ENCODE measurements at regions of chr2 and their contacts with region 1.

Region 1: DNA sequence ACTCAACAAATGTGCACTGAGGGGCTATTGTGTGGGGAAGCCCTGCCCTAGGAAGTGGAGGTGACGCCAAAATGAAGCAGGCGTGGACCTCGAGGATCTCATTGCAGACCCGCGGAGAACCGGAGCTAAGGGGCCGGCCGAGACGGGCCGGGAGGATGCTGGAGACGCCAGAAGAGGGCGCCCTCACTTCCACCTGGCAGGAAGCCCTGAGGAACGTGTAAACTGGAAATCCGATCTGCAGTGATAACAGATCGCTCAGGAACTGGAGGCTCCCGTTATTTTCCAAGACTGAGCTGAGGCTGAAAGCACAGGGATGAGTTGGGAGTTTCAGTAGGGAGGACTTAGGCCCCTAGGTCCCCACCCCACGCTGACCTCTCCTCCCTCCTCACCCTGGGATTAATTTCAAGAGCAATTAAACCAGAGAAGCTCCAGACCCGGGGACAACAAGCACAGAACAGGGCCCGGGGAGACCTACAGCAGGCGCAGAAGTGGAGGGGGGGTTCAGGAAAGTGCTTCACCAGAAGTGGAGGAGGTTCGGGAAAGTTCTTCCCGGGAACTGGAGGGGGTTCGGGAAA is 7.7 kb upstream of the COL6A3 start:
- DNase-seq: peak; percentile 66 to 92 (median 76)
- ATAC-seq: peak; percentile 88
- H3K4me3 ChIP-seq: peak overlapping the region; percentile 25
- H3K4me3 Mint-ChIP-seq: peak overlapping the region; percentile 65
- H3K27ac ChIP-seq: no peak overlapping the region
- H3K27ac Mint-ChIP-seq: no peak overlapping the region
- H3K4me1 ChIP-seq: peaks cover 11% of the 10 kb centered on the region
- H3K4me1 Mint-ChIP-seq: peaks cover 54% of the 10 kb centered on the region
- H3K27me3 ChIP-seq: no peaks in the 10 kb centered on the region
- H3K27me3 Mint-ChIP-seq: no peaks in the 10 kb centered on the region
- CTCF ChIP-seq: peak; percentile 92

Region 2: DNA sequence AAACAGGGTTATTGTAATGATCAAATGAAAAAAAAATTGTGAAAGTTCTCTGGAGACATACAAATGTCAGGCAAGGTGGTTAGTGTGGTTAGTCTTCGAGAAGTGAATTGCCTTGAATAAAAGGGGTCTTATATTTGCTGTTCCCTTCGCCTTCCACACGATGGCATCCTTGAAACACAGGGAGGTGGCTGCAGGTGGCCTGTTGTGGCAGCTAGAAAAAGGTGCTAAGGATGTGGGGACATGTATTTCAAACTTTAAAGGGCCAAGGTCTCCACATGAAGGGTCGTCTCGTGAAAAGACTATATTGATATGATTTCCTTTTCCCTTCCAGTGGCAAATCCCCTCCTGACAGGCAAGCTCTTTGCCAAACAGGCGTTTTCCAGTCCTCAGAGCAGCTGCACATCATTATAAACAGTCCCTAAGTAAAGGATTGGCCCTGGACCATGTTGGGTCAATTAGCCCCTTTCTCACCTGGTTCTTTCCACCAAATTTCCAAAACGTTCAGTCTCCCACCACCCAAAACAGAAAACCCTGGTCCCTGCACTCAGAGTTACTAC is 267.5 kb before region 1 on chr2:
- CTCF ChIA-PET with region 1: interaction called, 5 read pairs
- POLR2A ChIA-PET with region 1: interaction called, 3 read pairs
- intact Hi-C with region 1: loop called (anchors 5 kb)
- DNase-seq: peak; percentile 17 to 74 (median 40)
- ATAC-seq: peak; percentile 66
- H3K4me3 ChIP-seq: no peak overlapping the region
- H3K4me3 Mint-ChIP-seq: no peak overlapping the region
- H3K27ac ChIP-seq: no peak overlapping the region
- H3K27ac Mint-ChIP-seq: no peak overlapping the region
- H3K4me1 ChIP-seq: peaks cover 4% of the 10 kb centered on the region
- H3K4me1 Mint-ChIP-seq: no peaks in the 10 kb centered on the region
- H3K27me3 ChIP-seq: no peaks in the 10 kb centered on the region
- H3K27me3 Mint-ChIP-seq: no peaks in the 10 kb centered on the region
- CTCF ChIP-seq: peak; percentile 61

Region 3: DNA sequence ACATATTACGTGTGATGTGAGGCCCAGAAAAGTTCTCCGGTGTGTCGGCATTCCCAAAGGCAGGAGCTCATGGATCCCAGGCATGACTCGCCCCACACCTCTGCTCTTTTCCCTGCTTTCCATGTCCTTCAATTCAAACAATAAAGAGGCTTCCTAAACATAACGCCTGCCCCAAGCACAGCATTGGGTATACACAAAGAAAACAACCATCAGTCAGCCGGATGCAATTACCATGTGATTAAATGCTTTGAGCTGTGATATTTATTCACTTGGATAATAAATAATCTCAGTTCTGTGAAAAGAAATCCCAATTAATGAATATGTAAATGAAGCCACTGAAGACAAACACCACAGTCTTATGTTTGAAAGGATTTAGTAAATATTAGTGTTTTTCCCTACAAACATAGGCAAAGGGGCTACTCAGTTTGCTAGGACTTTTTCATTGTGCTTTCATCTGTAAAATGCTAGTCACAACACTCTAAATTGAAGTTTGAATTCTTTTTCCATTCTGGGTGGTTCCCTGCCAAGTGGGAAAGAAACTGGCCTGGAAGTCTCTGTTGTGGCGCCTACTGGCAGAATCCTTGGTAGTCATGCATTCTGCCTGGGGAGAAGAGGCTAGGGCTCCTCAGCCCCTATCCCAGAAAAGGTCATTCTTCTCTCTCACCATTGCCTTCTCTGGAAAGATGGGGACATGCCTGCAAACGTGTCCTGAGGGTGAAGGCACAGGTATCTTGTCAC is 152.3 kb before region 1 on chr2:
- CTCF ChIA-PET with region 1: no interaction called
- POLR2A ChIA-PET with region 1: no interaction called
- intact Hi-C with region 1: no loop called
- DNase-seq: no peak
- ATAC-seq: no peak
- H3K4me3 ChIP-seq: no peak overlapping the region
- H3K4me3 Mint-ChIP-seq: no peak overlapping the region
- H3K27ac ChIP-seq: no peak overlapping the region
- H3K27ac Mint-ChIP-seq: no peak overlapping the region
- H3K4me1 ChIP-seq: no peaks in the 10 kb centered on the region
- H3K4me1 Mint-ChIP-seq: no peaks in the 10 kb centered on the region
- H3K27me3 ChIP-seq: peaks cover 0 to 8% of the 10 kb centered on the region in 2 experiments
- H3K27me3 Mint-ChIP-seq: peaks cover 26% of the 10 kb centered on the region
- CTCF ChIP-seq: no peak

Region 4: GRCh38 chr2:237434866-237435311 is 13.3 kb after region 1 on chr2:
- CTCF ChIA-PET with region 1: interaction called, 47 read pairs
- POLR2A ChIA-PET with region 1: interaction called, 16 read pairs
- intact Hi-C with region 1: loop called (anchors 2 kb)
- DNase-seq: peak; percentile 29 to 90 (median 72)
- ATAC-seq: peak; percentile 65
- H3K4me3 ChIP-seq: peak overlapping the region; percentile 22
- H3K4me3 Mint-ChIP-seq: peak overlapping the region; percentile 87
- H3K27ac ChIP-seq: peak overlapping the region in 1 of 2 donors; percentile 48
- H3K27ac Mint-ChIP-seq: peak overlapping the region; percentile 83
- H3K4me1 ChIP-seq: peaks cover 72% of the 10 kb centered on the region
- H3K4me1 Mint-ChIP-seq: peaks cover 84% of the 10 kb centered on the region
- H3K27me3 ChIP-seq: no peaks in the 10 kb centered on the region
- H3K27me3 Mint-ChIP-seq: no peaks in the 10 kb centered on the region
- CTCF ChIP-seq: no peak

Region 5: GRCh38 chr2:237441605-237442274 is 20.1 kb after region 1 on chr2:
- CTCF ChIA-PET with region 1: interaction called, 9 read pairs
- POLR2A ChIA-PET with region 1: interaction called, 12 read pairs
- intact Hi-C with region 1: loop called in 1 of 2 experiments (anchors 2 kb)
- DNase-seq: peak in 5 of 14 experiments; percentile 37 to 73 (median 55)
- ATAC-seq: peak; percentile 96
- H3K4me3 ChIP-seq: no peak overlapping the region
- H3K4me3 Mint-ChIP-seq: peak overlapping the region; percentile 23
- H3K27ac ChIP-seq: no peak overlapping the region
- H3K27ac Mint-ChIP-seq: peak overlapping the region; percentile 72
- H3K4me1 ChIP-seq: peaks cover 46% of the 10 kb centered on the region
- H3K4me1 Mint-ChIP-seq: peaks cover 78% of the 10 kb centered on the region
- H3K27me3 ChIP-seq: no peaks in the 10 kb centered on the region
- H3K27me3 Mint-ChIP-seq: no peaks in the 10 kb centered on the region
- CTCF ChIP-seq: no peak

Region 6: GRCh38 chr2:237474931-237475703 is 53.5 kb after region 1 on chr2:
- CTCF ChIA-PET with region 1: interaction called, 127 read pairs
- POLR2A ChIA-PET with region 1: interaction called, 59 read pairs
- intact Hi-C with region 1: loop called (anchors 1 kb)
- DNase-seq: peak; percentile 57 to 85 (median 72)
- ATAC-seq: peak; percentile 85
- H3K4me3 ChIP-seq: peak overlapping the region; percentile 67
- H3K4me3 Mint-ChIP-seq: peak overlapping the region; percentile 93
- H3K27ac ChIP-seq: no peak overlapping the region
- H3K27ac Mint-ChIP-seq: peak overlapping the region; percentile 82
- H3K4me1 ChIP-seq: peaks cover 20% of the 10 kb centered on the region
- H3K4me1 Mint-ChIP-seq: peaks cover 32% of the 10 kb centered on the region
- H3K27me3 ChIP-seq: peaks cover 0 to 5% of the 10 kb centered on the region in 2 experiments
- H3K27me3 Mint-ChIP-seq: peaks cover 15% of the 10 kb centered on the region
- CTCF ChIP-seq: peak; percentile 97

Region 7: DNA sequence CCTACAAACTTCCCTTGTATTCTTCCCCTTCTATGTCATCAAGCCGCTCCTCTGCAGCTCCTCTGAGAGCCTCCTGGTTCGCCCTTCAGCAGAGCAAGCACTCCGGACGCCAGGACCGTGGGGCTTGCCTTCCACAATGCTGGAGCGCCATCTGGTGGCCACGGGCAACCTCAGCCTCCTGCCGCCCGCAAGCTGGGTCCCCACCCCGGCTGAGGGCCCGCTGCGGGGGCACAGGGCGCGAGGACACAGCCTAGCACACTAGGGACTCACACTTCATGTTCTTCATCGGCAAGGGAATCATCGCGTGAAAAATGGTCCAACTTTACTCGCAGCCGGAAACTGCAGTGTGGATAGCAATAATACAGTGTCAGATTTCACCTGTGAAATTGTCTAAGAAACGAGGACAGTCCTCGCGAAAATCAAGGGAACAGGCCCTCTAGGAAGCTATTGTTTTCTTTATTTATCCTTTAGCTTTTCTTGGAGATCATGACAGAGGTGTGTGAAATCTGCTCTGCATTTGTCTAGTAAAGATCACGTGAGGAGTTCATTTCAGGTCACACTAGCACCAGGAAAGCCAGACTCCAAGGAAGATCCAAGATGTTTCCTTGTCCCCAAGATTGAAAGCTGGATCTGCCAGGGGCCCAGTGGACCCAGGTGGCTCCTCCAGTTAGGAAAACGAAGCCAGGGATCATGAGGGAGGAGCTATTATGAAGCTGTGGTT is 150.6 kb after region 1 on chr2:
- CTCF ChIA-PET with region 1: interaction called, 5 read pairs
- POLR2A ChIA-PET with region 1: no interaction called
- intact Hi-C with region 1: loop called (anchors 2 to 10 kb)
- DNase-seq: peak; percentile 78 to 92 (median 84)
- ATAC-seq: peak; percentile 94
- H3K4me3 ChIP-seq: no peak overlapping the region
- H3K4me3 Mint-ChIP-seq: no peak overlapping the region
- H3K27ac ChIP-seq: no peak overlapping the region
- H3K27ac Mint-ChIP-seq: no peak overlapping the region
- H3K4me1 ChIP-seq: peaks cover 6% of the 10 kb centered on the region
- H3K4me1 Mint-ChIP-seq: peaks cover 5% of the 10 kb centered on the region
- H3K27me3 ChIP-seq: peaks cover 0 to 4% of the 10 kb centered on the region in 2 experiments
- H3K27me3 Mint-ChIP-seq: peaks cover 7% of the 10 kb centered on the region
- CTCF ChIP-seq: peak; percentile 99